ENCODE measurements at regions of chr15 and their contacts with region 1.

Region 1: DNA sequence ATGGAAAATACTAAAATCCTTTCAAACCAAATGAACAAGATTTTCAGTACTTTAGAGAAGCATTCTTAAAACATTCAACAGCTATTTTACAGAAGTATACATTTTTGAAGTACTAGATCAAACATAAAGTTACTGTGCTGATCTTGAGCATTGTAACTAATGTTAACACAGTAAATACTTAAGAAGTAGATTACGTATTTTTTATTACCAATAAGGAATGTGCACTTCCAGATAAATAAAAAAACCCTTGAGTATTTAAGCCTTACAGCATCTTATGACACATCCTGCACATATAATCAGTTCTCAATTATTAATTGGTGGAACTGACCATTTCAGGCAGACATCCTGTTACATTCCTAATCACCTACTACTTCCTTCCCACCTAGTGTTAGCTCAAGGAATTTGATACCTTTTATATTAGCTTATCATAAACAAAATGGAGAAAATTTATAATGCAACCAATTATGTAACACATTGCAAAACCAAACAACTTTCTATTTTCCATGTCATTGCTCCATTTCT is 32.8 kb downstream of the COPS2 start:
- DNase-seq: no peak
- ATAC-seq: no peak
- H3K4me3 ChIP-seq: no peak overlapping the region
- H3K27ac ChIP-seq: no peak overlapping the region
- H3K4me1 ChIP-seq: no peaks in the 10 kb centered on the region
- H3K27me3 ChIP-seq: no peaks in the 10 kb centered on the region

Region 2: GRCh38 chr15:49015896-49016295 is 106.7 kb before region 1 on chr15:
- intact Hi-C with region 1: loop called in 1 of 4 experiments (anchors 10 kb)
- DNase-seq: no peak
- ATAC-seq: no peak
- H3K4me3 ChIP-seq: no peak overlapping the region
- H3K27ac ChIP-seq: no peak overlapping the region
- H3K4me1 ChIP-seq: no peaks in the 10 kb centered on the region
- H3K27me3 ChIP-seq: no peaks in the 10 kb centered on the region

Measured in right cardiac atrium (tissue), 5 donors.